CD4-positive, alpha-beta memory T cell (primary cell): ENCODE measurements at regions of chr5 and their contacts with region 1.

Region 1: GRCh38 chr5:179806250-179807222 is at the start of gene MGAT4B:
- DNase-seq: peak; percentile 59 to 68 (median 63)
- H3K4me3 ChIP-seq: peak within 1 kb of the TSS; percentile 11 to 55
- H3K4me3 Mint-ChIP-seq: peak within 1 kb of the TSS; percentile 71 to 87 (median 78)
- H3K27ac ChIP-seq: peak within 1 kb of the TSS; percentile 61
- H3K27ac Mint-ChIP-seq: peak within 1 kb of the TSS in 3 of 7 donors; percentile 59 to 73 (median 60)
- H3K4me1 ChIP-seq: peaks cover 40% of the 10 kb centered on the region
- H3K4me1 Mint-ChIP-seq: peaks cover 14 to 41% (median 30%) of the 10 kb centered on the region in 4 donors
- H3K27me3 ChIP-seq: no peaks in the 10 kb centered on the region
- H3K27me3 Mint-ChIP-seq: no peaks in the 10 kb centered on the region
- total RNA-seq, gene MGAT4B: 119 to 121 TPM

Region 2: GRCh38 chr5:179795863-179796833 is 10.4 kb before region 1 on chr5:
- CTCF ChIA-PET with region 1: interaction called, 25 read pairs
- POLR2A ChIA-PET with region 1: interaction called, 50 read pairs
- intact Hi-C with region 1: loop called (anchors 1 kb)
- DNase-seq: peak; percentile 61 to 77 (median 68)
- H3K4me3 ChIP-seq: peak overlapping the region; percentile 23 to 69
- H3K4me3 Mint-ChIP-seq: peak overlapping the region; percentile 50 to 79 (median 64)
- H3K27ac ChIP-seq: peak overlapping the region; percentile 44
- H3K27ac Mint-ChIP-seq: peak overlapping the region in 6 of 7 donors; percentile 11 to 89 (median 57)
- H3K4me1 ChIP-seq: peaks cover 25% of the 10 kb centered on the region
- H3K4me1 Mint-ChIP-seq: peaks cover 11 to 51% (median 27%) of the 10 kb centered on the region in 4 donors
- H3K27me3 ChIP-seq: no peaks in the 10 kb centered on the region
- H3K27me3 Mint-ChIP-seq: no peaks in the 10 kb centered on the region

Region 3: DNA sequence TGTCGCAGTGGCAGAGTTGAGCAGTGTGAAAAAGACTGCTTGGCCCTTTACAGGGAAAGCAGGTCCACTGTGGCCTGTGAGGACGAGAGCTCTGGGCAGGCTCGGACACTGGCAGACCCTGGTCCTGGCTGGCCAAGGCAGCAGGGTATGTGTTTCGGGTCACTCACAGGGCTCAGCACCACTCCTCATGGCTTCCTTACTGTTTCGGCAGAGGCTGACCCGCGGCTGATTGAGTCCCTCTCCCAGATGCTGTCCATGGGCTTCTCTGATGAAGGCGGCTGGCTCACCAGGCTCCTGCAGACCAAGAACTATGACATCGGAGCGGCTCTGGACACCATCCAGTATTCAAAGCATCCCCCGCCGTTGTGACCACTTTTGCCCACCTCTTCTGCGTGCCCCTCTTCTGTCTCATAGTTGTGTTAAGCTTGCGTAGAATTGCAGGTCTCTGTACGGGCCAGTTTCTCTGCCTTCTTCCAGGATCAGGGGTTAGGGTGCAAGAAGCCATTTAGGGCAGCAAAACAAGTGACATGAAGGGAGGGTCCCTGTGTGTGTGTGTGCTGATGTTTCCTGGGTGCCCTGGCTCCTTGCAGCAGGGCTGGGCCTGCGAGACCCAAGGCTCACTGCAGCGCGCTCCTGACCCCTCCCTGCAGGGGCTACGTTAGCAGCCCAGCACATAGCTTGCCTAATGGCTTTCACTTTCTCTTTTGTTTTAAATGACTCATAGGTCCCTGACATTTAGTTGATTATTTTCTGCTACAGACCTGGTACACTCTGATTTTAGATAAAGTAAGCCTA is 29.9 kb after region 1 on chr5:
- CTCF ChIA-PET with region 1: interaction called, 3 read pairs
- POLR2A ChIA-PET with region 1: interaction called, 9 read pairs
- intact Hi-C with region 1: loop called (anchors 5 kb)
- DNase-seq: peak; percentile 48 to 84 (median 64)
- H3K4me3 ChIP-seq: peak overlapping the region in 1 of 2 donors; percentile 30
- H3K4me3 Mint-ChIP-seq: peak overlapping the region in 7 of 8 donors; percentile 37 to 74 (median 65)
- H3K27ac ChIP-seq: peak overlapping the region; percentile 57
- H3K27ac Mint-ChIP-seq: peak overlapping the region; percentile 82 to 96 (median 93)
- H3K4me1 ChIP-seq: peaks cover 21% of the 10 kb centered on the region
- H3K4me1 Mint-ChIP-seq: peaks cover 14 to 26% (median 17%) of the 10 kb centered on the region in 4 donors
- H3K27me3 ChIP-seq: no peaks in the 10 kb centered on the region
- H3K27me3 Mint-ChIP-seq: no peaks in the 10 kb centered on the region

Region 4: GRCh38 chr5:179907570-179908324 is 101.2 kb after region 1 on chr5 and contains the start of gene TBC1D9B:
- CTCF ChIA-PET with region 1: interaction called, 57 read pairs
- POLR2A ChIA-PET with region 1: interaction called, 7 read pairs
- intact Hi-C with region 1: loop called (anchors 1 kb)
- DNase-seq: peak; percentile 76 to 82 (median 78)
- H3K4me3 ChIP-seq: peak within 1 kb of the TSS in 1 of 2 donors; percentile 57
- H3K4me3 Mint-ChIP-seq: peak within 1 kb of the TSS; percentile 85 to 92 (median 88)
- H3K27ac ChIP-seq: peak within 1 kb of the TSS; percentile 54
- H3K27ac Mint-ChIP-seq: peak within 1 kb of the TSS; percentile 78 to 94 (median 84)
- H3K4me1 ChIP-seq: peaks cover 23% of the 10 kb centered on the region
- H3K4me1 Mint-ChIP-seq: peaks cover 7 to 38% (median 15%) of the 10 kb centered on the region in 4 donors
- H3K27me3 ChIP-seq: no peaks in the 10 kb centered on the region
- H3K27me3 Mint-ChIP-seq: no peaks in the 10 kb centered on the region
- total RNA-seq, gene TBC1D9B: 84.3 to 85.0 TPM

Region 5: DNA sequence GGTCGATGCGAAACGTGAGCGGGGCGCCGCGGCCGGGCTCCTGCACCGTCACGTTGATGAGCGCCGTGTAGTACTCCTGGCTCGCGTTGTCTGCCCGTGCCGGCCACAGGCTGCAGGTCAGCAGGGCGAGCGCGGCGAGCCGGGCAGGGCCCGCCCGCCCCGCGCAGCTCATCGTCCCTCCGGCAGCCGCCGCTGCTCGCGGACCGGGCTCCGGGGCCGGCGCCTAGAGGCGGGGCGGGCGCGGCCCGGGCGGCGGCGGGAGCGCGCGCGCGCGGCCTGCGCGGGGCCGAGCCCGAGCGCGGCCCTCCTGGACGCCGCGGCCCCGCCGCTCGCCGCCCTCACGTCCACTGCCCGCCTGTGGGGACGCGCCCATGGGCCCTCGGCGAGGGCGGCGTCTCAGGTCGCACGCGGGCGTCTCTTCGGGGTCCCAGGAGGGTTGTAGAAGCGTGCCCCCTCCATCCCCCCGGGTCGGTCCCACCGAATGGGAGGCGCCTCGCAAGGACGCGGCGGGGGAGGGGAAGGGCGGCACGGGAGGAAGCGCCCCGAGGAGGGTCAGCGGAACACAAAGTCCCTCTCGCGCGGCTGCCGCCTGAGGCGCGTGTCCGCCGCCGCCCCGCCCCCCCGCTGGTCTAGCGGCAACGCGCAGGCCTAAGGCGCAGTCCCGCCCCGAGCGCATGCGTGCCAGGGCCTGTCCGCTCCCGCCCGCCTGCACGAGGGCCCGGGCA is 265.2 kb after region 1 on chr5 and contains the start of gene RNF130:
- CTCF ChIA-PET with region 1: no interaction called
- POLR2A ChIA-PET with region 1: no interaction called
- intact Hi-C with region 1: loop called (anchors 5 kb)
- DNase-seq: peak; percentile 70 to 84 (median 79)
- H3K4me3 ChIP-seq: peak within 1 kb of the TSS; percentile 37 to 64
- H3K4me3 Mint-ChIP-seq: peak within 1 kb of the TSS; percentile 83 to 93 (median 89)
- H3K27ac ChIP-seq: peak within 1 kb of the TSS; percentile 56
- H3K27ac Mint-ChIP-seq: peak within 1 kb of the TSS; percentile 80 to 94 (median 89)
- H3K4me1 ChIP-seq: peaks cover 22% of the 10 kb centered on the region
- H3K4me1 Mint-ChIP-seq: peaks cover 18 to 35% (median 24%) of the 10 kb centered on the region in 4 donors
- H3K27me3 ChIP-seq: no peaks in the 10 kb centered on the region
- H3K27me3 Mint-ChIP-seq: peaks cover 0 to 3% of the 10 kb centered on the region in 2 donors
- total RNA-seq, gene RNF130: 18.1 to 21.2 TPM

Region 6: DNA sequence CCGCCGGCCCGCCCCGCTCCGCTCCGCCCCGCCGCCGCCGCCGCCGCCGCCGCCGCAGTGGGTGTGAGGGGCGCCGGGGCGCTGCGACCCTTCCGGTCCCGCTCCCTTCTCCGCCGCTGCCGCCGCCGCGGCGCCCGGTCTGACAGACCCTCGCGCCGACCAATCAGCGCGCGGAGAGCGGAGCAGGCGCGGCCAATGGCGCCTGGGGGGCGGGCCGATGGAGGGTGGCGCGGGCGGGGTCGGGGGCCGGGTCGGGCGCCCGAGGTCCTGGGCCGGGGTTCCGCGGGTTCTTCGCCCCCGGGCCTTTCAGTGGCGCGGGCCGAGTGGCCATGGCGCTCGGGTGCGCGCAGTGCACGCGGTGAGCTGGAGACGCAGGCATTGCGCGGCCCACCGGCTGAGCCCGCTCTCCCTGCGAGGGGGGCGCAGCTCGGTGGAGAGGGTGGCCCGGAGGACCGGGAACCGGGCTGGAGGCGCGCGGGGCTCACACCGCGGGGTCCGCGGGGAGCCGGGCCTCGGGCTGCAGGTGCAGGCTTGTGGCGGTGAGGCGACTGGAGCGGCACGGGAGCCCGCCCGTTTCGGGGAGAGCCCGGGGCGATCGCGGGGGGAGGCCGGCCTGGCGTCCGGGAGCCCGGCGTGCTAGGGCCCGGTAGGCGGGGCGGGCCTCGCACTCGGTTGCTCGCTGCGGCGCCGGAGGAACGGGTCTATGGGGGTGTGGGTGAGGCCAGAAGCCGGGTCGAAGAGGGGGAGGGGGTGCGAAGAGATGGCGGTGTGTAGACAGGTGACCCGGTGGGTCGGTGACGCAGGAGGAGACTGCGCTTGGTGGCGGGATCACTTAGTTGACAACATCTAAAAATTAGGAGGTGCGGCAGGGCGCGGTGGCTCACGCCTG is 485.7 kb after region 1 on chr5 and contains the start of gene MAPK9:
- CTCF ChIA-PET with region 1: no interaction called
- POLR2A ChIA-PET with region 1: no interaction called
- intact Hi-C with region 1: loop called (anchors 5 kb)
- DNase-seq: peak; percentile 84 to 95 (median 88)
- H3K4me3 ChIP-seq: peak within 1 kb of the TSS in 1 of 2 donors; percentile 74
- H3K4me3 Mint-ChIP-seq: peak within 1 kb of the TSS; percentile 95 to 100 (median 99)
- H3K27ac ChIP-seq: peak within 1 kb of the TSS; percentile 92
- H3K27ac Mint-ChIP-seq: peak within 1 kb of the TSS; percentile 94 to 100 (median 100)
- H3K4me1 ChIP-seq: peaks cover 34% of the 10 kb centered on the region
- H3K4me1 Mint-ChIP-seq: peaks cover 32 to 62% (median 47%) of the 10 kb centered on the region in 4 donors
- H3K27me3 ChIP-seq: no peaks in the 10 kb centered on the region
- H3K27me3 Mint-ChIP-seq: no peaks in the 10 kb centered on the region
- total RNA-seq, gene MAPK9: 39.1 TPM